Breast epithelium (tissue), 4 donors: ENCODE measurements at regions of chr20 and their contacts with region 1.

Region 1: GRCh38 chr20:49447946-49448809 is 34.3 kb downstream of the KCNB1 start:
- DNase-seq: no peak
- H3K4me3 ChIP-seq: no peak overlapping the region
- H3K27ac ChIP-seq: no peak overlapping the region
- H3K4me1 ChIP-seq: peaks cover 0 to 9% of the 10 kb centered on the region in 2 donors
- H3K27me3 ChIP-seq: no peaks in the 10 kb centered on the region
- CTCF ChIP-seq: no peak
- POLR2A ChIP-seq: no peak

Region 2: GRCh38 chr20:49397525-49397924 is 50.7 kb before region 1 on chr20:
- intact Hi-C with region 1: no loop called
- DNase-seq: no peak
- H3K4me3 ChIP-seq: no peak overlapping the region
- H3K27ac ChIP-seq: no peak overlapping the region
- H3K4me1 ChIP-seq: no peaks in the 10 kb centered on the region
- H3K27me3 ChIP-seq: no peaks in the 10 kb centered on the region
- CTCF ChIP-seq: no peak
- POLR2A ChIP-seq: no peak

Region 3: DNA sequence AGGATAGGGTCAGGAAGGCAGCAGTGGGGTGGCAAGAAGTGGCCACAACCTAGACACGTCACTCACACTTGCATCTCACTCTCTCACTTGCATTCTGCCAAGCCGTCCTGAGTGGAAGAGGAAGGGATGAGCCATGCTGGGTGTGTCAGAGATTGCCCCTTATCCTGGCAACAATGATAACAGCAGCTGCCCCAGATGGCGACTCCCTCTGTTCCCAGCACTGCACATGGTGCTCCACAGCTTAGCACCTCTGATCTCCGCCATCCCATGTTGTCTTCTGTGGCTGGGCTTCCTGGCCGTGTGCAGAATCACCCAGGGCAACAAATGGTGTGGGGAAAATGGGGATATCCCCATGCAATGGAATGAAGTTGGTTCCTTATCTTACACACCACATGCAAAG is 23.2 kb after region 1 on chr20:
- intact Hi-C with region 1: no loop called
- DNase-seq: no peak
- H3K4me3 ChIP-seq: no peak overlapping the region
- H3K27ac ChIP-seq: no peak overlapping the region
- H3K4me1 ChIP-seq: no peaks in the 10 kb centered on the region
- H3K27me3 ChIP-seq: no peaks in the 10 kb centered on the region
- CTCF ChIP-seq: no peak
- POLR2A ChIP-seq: no peak

Region 4: DNA sequence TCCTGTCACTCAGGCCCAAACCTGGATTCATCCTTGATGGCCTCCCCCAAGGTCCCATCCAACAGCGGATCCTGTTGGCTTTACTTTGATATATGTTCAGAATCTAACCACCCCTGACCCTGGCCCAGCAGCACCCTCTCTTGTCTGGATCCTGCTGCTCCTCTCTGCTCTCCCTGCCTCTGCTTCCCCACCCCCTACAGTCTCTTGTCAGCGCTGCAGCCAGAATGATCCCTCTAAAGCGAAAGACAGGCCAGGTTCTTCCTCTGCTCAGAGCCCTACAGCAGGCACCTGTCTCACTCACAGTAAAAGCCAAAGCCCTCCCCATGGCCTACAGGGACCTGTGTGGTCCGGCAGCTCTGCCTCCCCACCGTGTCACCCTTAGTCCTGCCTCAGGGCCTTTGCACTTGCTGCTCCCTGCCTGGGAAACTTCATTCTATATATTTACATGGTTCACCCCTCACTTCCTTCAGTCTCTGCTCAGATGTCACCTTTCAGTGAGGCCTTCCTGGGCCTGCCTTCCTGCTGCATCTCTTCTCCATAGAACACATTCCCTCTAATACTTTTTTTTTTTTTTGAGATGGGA is 71.7 kb after region 1 on chr20:
- intact Hi-C with region 1: loop called (anchors 2 kb)
- DNase-seq: peak in 1 of 2 donors; percentile 14
- H3K4me3 ChIP-seq: no peak overlapping the region
- H3K27ac ChIP-seq: no peak overlapping the region
- H3K4me1 ChIP-seq: no peaks in the 10 kb centered on the region
- H3K27me3 ChIP-seq: no peaks in the 10 kb centered on the region
- CTCF ChIP-seq: no peak
- POLR2A ChIP-seq: no peak